ENCODE measurements at regions of chr5 and their contacts with region 1.

Region 1: DNA sequence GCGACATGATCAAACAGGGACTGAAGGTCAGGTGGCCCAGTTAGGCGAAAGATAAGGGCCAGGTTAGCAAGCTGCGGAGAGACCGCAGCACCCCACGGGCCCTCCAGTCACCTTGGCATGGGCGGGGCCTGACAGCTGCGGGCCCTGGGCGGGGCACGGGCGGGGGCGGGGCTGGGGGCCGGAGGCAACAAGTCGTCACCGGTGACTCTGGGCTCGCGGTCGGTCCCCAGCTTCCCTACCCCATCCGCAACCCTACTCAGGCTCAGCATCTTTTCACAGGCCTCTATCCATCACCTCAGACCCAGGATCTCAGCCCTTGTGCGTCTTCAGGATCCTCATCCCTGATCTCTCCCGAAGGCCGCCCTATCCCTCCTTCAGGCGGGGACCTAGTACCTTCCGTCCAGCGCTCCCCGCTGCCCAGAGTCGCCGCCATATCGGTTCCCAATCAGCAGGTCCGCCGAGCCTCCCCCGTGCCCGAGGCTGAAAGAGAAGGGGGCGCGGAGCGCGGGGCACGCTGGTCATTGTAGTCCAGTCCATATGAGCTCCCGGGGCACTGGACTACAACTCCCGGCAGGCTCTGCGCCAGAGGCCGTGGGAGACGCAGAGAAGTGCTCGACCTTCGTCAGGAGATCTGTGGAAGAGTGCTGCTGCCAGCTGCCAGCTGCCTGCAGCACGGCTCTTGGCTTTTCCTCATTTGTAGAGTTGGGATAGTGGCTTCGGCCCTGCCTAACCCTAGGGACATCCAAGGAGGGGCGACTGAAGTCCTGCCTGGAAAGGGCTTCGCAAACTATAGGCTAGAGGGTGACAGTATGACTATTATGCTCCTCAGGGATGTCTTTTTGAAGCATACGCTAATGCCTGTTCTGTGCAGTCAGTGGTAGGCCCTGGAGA is at the start of gene DNAJC18:
- DNase-seq: peak; percentile 96
- H3K4me3 Mint-ChIP-seq: peak within 1 kb of the TSS; percentile 98
- H3K27ac Mint-ChIP-seq: peak within 1 kb of the TSS; percentile 99
- H3K4me1 Mint-ChIP-seq: peaks cover 62% of the 10 kb centered on the region
- H3K27me3 Mint-ChIP-seq: no peaks in the 10 kb centered on the region
- total RNA-seq, gene DNAJC18: 54.1 to 56.0 TPM

Region 2: DNA sequence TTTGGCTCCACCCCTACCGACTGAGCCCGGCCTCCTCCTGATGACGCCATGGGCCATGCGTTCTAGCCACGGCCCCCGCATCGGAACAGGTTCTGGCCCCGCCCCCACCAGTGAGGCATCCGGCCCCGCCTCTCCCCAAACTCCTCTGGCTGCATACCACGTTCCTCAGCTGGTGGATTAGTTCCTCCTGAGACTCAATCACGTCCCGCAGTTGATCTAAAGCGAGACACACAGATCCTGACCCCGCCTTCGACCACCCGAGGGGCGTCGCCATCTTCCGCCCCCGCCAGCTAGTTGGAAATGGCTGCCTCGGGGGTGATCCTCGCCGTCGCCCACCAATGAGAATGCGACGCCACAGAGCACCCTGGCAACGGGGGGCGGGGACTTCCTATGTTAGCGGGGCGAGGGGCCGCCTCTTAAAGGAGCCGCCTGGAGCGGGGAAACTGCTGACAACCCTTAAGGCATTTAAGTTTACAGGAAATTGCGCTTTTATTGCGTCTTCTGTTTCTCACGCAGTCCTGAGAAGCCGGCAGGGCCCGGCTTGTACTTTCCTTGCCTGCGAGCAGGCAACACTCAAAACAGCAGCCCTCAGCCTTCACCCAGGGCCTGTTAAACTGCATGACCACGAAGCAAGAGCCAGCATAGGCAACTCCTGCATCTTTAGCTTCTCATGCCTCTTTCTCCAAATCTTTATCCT is 35.3 kb before region 1 on chr5 and contains the start of gene SPATA24:
- CTCF ChIA-PET with region 1: interaction called, 11 read pairs
- POLR2A ChIA-PET with region 1: interaction called, 7 read pairs
- intact Hi-C with region 1: loop called (anchors 1 kb)
- DNase-seq: peak; percentile 100
- H3K4me3 Mint-ChIP-seq: peak within 1 kb of the TSS; percentile 91
- H3K27ac Mint-ChIP-seq: peak within 1 kb of the TSS; percentile 99
- H3K4me1 Mint-ChIP-seq: peaks cover 34% of the 10 kb centered on the region
- H3K27me3 Mint-ChIP-seq: no peaks in the 10 kb centered on the region
- total RNA-seq, gene SPATA24: 3.7 to 5.2 TPM

Region 3: DNA sequence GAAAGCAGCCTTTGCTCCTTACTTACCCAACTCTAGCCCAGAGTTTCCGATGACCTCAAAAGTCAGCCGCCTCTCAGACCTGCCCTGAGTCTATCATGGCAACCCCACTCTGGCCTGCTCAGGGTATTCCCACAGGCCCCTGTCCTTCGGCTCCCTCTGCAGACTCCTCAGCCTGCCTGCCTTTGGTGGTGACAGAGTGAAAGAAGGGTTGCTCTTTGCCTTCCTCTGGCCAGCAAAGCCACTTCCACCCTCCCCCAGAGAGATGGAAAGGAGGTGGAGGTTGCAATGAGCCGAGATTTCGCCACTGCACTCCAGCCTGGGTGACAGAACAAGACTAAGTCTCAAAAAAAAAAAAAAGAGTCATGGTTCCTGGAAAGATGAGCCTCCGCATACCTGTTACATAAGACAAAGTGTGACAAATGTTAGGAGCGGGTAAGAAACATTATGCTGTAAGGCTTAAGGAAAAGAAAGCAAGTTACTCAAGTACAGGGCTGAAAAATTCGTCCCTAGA is 29.2 kb after region 1 on chr5:
- CTCF ChIA-PET with region 1: interaction called, 10 read pairs
- POLR2A ChIA-PET with region 1: interaction called, 17 read pairs
- intact Hi-C with region 1: no loop called
- DNase-seq: peak; percentile 69
- H3K4me3 Mint-ChIP-seq: peak overlapping the region; percentile 41
- H3K27ac Mint-ChIP-seq: peak overlapping the region; percentile 83
- H3K4me1 Mint-ChIP-seq: peaks cover 51% of the 10 kb centered on the region
- H3K27me3 Mint-ChIP-seq: no peaks in the 10 kb centered on the region

Region 4: GRCh38 chr5:139482050-139482889 is 43.0 kb after region 1 on chr5 and contains the start of gene STING1:
- CTCF ChIA-PET with region 1: interaction called, 13 read pairs
- POLR2A ChIA-PET with region 1: interaction called, 79 read pairs
- intact Hi-C with region 1: loop called (anchors 1 kb)
- DNase-seq: peak; percentile 83
- H3K4me3 Mint-ChIP-seq: peak within 1 kb of the TSS; percentile 94
- H3K27ac Mint-ChIP-seq: peak within 1 kb of the TSS; percentile 99
- H3K4me1 Mint-ChIP-seq: peaks cover 38% of the 10 kb centered on the region
- H3K27me3 Mint-ChIP-seq: no peaks in the 10 kb centered on the region
- total RNA-seq, gene STING1: 339 to 344 TPM